Esophagus squamous epithelium (tissue), 5 donors: ENCODE measurements at regions of chr14 and their contacts with region 1.

Region 1: DNA sequence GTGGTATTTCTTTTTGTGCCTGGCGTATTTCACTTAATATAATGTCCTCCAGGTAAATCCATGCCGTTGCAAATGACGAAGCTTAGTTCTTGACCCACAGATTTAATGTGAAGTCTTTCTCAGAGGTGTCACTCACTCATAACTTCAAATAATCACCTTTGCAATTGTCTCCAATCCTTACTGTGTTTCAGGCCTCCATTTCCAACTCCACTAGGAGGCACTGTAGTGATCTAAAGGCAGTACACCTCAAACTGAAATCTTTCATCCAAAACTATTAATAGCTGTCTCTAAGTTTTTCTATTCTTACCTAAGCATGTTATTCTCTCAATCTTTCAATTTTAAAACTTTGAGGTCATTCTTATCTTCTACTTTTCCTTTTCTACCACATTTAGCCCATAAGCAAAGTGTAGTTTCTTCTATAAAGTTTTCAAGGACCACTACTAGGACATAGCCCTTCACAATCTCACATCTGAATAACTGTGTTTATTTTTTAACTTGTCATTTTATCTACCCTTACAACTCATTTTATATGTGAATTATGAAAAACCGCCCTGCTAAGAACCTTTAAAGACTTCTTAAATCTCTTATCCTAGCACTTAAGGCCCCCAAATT is 25.5 kb upstream of the FBXO34 start:
- DNase-seq: no peak
- H3K4me3 ChIP-seq: no peak overlapping the region
- H3K27ac ChIP-seq: no peak overlapping the region
- H3K4me1 ChIP-seq: no peaks in the 10 kb centered on the region
- H3K27me3 ChIP-seq: peaks cover 0 to 11% (median 0%) of the 10 kb centered on the region in 4 donors
- CTCF ChIP-seq: peak in 5 of 6 experiments; percentile 41 to 68 (median 52)
- POLR2A ChIP-seq: no peak

Region 2: GRCh38 chr14:55430024-55430690 is 184.4 kb after region 1 on chr14:
- intact Hi-C with region 1: loop called (anchors 5 kb)
- DNase-seq: no peak
- H3K4me3 ChIP-seq: no peak overlapping the region
- H3K27ac ChIP-seq: peak overlapping the region in 2 of 4 donors; percentile 29 to 45
- H3K4me1 ChIP-seq: peaks cover 0 to 15% (median 0%) of the 10 kb centered on the region in 3 donors
- H3K27me3 ChIP-seq: no peaks in the 10 kb centered on the region
- CTCF ChIP-seq: peak in 5 of 6 experiments; percentile 3 to 62 (median 26)
- POLR2A ChIP-seq: no peak